WTC11 (cell line): ENCODE measurements at regions of chr15 and their contacts with region 1.

Region 1: DNA sequence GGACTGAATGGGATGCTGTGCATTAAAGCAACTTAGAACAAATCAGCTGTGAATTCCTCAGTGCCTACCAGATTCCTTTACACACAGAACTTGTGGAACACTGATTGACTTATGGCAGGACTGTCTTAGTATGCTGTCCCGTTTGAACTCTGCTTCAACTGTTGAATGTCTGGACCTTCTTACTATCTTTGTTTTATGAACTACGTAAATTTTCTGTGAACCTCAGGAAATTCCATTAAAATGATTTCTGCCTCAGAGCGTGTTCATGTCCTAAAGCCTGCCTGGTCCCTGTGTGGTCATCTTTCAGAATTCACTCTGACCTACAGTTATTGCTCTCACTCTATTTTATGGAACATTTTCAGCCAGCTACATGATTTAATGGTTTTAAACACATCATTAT is 29.4 kb upstream of the FBN1 start:
- DNase-seq: no peak
- ATAC-seq: no peak
- H3K4me3 Mint-ChIP-seq: no peak overlapping the region
- H3K27ac Mint-ChIP-seq: no peak overlapping the region
- H3K4me1 Mint-ChIP-seq: no peaks in the 10 kb centered on the region
- H3K27me3 Mint-ChIP-seq: no peaks in the 10 kb centered on the region
- CTCF ChIP-seq: no peak

Region 2: GRCh38 chr15:48475600-48476395 is 199.1 kb before region 1 on chr15:
- CTCF ChIA-PET with region 1: no interaction called
- POLR2A ChIA-PET with region 1: interaction called, 10 read pairs
- DNase-seq: no peak
- ATAC-seq: no peak
- H3K4me3 Mint-ChIP-seq: no peak overlapping the region
- H3K27ac Mint-ChIP-seq: no peak overlapping the region
- H3K4me1 Mint-ChIP-seq: peaks cover 30% of the 10 kb centered on the region
- H3K27me3 Mint-ChIP-seq: no peaks in the 10 kb centered on the region
- CTCF ChIP-seq: no peak

Region 3: DNA sequence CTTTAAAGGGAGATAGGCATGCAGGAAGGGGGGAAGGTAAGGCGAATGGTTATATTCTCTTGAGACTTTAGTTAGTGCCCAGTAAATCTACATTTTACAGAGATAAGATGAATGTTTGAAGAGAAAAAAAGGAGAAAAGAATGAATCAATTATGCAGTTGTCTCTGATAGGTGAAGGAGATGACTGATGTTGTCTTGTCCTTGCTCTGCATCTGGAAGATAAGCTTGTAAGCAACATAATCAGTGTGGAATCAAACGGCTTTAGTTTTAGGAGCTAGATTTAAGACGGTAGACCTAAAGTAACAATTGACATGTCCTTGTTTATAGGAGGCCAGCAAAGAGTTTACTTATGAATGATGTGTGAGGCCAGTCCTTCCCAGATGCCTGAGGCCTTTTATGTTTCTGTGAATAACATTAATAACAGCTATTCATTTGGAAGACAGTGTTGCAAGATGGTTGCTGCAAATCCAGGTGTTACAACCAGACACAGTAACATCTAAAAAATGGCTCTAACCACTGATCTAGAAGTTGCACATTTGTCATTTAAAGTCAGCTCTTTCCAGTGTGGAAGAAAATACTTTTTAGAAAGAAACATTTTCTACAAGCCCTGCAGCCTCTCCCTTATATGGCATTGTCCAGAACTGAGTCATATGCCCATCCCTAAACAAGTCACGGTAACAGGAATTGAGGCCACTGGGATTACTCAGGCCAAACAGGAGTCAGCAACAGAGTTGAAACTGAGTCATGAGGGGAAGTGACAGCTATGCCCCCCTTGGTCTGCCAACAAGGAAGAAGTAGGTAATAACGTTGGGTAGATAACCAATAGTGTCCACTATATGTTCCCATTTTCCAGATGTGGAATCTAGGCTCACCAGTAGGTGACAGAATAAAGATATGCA is 48.1 kb after region 1 on chr15:
- CTCF ChIA-PET with region 1: no interaction called
- POLR2A ChIA-PET with region 1: no interaction called
- DNase-seq: no peak
- ATAC-seq: no peak
- H3K4me3 Mint-ChIP-seq: no peak overlapping the region
- H3K27ac Mint-ChIP-seq: no peak overlapping the region
- H3K4me1 Mint-ChIP-seq: no peaks in the 10 kb centered on the region
- H3K27me3 Mint-ChIP-seq: no peaks in the 10 kb centered on the region
- CTCF ChIP-seq: no peak